ENCODE measurements at regions of chr4 and their contacts with region 1.

Region 1: GRCh38 chr4:89158884-89159503 is 47.7 kb downstream of the TIGD2 start:
- DNase-seq: no peak
- ATAC-seq: peak in 5 of 8 donors; percentile 35 to 72 (median 42)
- H3K4me3 ChIP-seq: no peak overlapping the region
- H3K27ac ChIP-seq: no peak overlapping the region
- H3K4me1 ChIP-seq: no peaks in the 10 kb centered on the region
- H3K27me3 ChIP-seq: no peaks in the 10 kb centered on the region
- CTCF ChIP-seq: peak; percentile 47 to 85 (median 78)

Region 2: DNA sequence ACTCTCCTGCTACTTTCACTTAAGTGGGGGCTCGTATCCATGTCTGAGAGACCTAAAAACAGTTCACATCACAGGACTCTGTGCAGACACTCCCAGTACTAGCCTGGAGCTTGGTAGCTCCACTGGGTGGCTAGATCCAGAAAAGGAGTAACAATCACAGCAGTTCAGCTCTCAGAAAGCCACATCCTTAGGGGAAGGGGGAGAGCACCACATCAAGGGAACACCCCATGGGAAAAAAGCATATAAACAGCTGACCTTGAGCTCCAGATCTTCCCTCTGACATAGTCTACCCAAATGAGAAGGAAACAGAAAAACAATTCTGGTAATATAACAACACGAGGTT is 277.8 kb before region 1 on chr4:
- intact Hi-C with region 1: no loop called
- DNase-seq: no peak
- ATAC-seq: peak in 1 of 8 donors; percentile 11
- H3K4me3 ChIP-seq: no peak overlapping the region
- H3K27ac ChIP-seq: no peak overlapping the region
- H3K4me1 ChIP-seq: peaks cover 0 to 7% (median 0%) of the 10 kb centered on the region in 9 donors
- H3K27me3 ChIP-seq: no peaks in the 10 kb centered on the region
- CTCF ChIP-seq: no peak

Region 3: GRCh38 chr4:89142691-89143669 is 16.0 kb before region 1 on chr4:
- intact Hi-C with region 1: no loop called
- DNase-seq: no peak
- ATAC-seq: no peak
- H3K4me3 ChIP-seq: no peak overlapping the region
- H3K27ac ChIP-seq: no peak overlapping the region
- H3K4me1 ChIP-seq: peaks cover 0 to 5% (median 0%) of the 10 kb centered on the region in 9 donors
- H3K27me3 ChIP-seq: no peaks in the 10 kb centered on the region
- CTCF ChIP-seq: no peak

Region 4: GRCh38 chr4:89226665-89227574 is 67.9 kb after region 1 on chr4:
- intact Hi-C with region 1: loop called in 2 of 10 experiments (anchors 2 to 10 kb)
- DNase-seq: peak; percentile 26 to 87
- ATAC-seq: peak; percentile 84 to 98 (median 94)
- H3K4me3 ChIP-seq: no peak overlapping the region
- H3K27ac ChIP-seq: no peak overlapping the region
- H3K4me1 ChIP-seq: no peaks in the 10 kb centered on the region
- H3K27me3 ChIP-seq: no peaks in the 10 kb centered on the region
- CTCF ChIP-seq: peak; percentile 30 to 83 (median 78)

Measured in heart right ventricle (tissue), 16 donors.